Stomach (tissue), 19 donors: ENCODE measurements at regions of chr12 and their contacts with region 1.

Region 1: GRCh38 chr12:6182116-6182898 is 17.9 kb upstream of the CD9 start:
- DNase-seq: peak; percentile 59 to 88
- H3K4me3 ChIP-seq: no peak overlapping the region
- H3K27ac ChIP-seq: peak overlapping the region; percentile 52 to 81 (median 76)
- H3K4me1 ChIP-seq: peaks cover 25 to 63% (median 43%) of the 10 kb centered on the region in 4 donors
- H3K27me3 ChIP-seq: no peaks in the 10 kb centered on the region
- CTCF ChIP-seq: no peak
- EP300 ChIP-seq: no peak
- POLR2A ChIP-seq: no peak

Region 2: DNA sequence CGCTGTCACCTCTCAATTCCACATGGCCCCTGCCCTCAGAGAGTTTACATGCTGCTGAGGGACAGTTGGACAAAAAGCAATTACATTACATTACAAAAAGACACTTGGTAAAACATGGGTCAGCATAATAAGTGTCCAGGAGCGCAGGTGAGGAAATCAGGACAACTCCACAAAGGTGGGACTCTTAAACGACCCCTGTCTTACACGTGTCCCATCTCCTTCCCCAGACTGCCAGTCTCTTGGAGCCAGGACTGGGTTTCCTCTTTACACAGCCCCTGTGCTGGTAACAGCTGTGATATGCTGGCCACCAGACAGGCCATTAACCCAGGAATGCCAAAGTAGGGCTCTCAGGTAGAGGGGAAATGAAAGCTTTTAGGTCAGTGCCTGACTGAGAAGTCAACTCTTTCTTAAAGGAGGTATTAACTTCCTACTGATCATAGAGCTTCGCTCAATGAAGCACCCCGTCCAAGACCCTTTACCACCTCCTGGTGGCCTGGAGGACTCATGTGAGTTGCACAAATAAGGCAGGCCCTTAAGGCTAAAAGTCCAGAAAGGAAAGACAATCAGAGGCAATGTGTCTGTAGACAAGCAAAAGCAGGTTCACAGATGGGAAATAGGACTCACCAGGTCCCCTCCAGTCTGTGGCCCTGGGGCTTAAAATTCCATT is 292.8 kb before region 1 on chr12:
- intact Hi-C with region 1: no loop called
- DNase-seq: no peak
- H3K4me3 ChIP-seq: no peak overlapping the region
- H3K27ac ChIP-seq: no peak overlapping the region
- H3K4me1 ChIP-seq: no peaks in the 10 kb centered on the region
- H3K27me3 ChIP-seq: peaks cover 0 to 24% (median 4%) of the 10 kb centered on the region in 3 donors
- CTCF ChIP-seq: no peak
- EP300 ChIP-seq: no peak
- POLR2A ChIP-seq: no peak

Region 3: DNA sequence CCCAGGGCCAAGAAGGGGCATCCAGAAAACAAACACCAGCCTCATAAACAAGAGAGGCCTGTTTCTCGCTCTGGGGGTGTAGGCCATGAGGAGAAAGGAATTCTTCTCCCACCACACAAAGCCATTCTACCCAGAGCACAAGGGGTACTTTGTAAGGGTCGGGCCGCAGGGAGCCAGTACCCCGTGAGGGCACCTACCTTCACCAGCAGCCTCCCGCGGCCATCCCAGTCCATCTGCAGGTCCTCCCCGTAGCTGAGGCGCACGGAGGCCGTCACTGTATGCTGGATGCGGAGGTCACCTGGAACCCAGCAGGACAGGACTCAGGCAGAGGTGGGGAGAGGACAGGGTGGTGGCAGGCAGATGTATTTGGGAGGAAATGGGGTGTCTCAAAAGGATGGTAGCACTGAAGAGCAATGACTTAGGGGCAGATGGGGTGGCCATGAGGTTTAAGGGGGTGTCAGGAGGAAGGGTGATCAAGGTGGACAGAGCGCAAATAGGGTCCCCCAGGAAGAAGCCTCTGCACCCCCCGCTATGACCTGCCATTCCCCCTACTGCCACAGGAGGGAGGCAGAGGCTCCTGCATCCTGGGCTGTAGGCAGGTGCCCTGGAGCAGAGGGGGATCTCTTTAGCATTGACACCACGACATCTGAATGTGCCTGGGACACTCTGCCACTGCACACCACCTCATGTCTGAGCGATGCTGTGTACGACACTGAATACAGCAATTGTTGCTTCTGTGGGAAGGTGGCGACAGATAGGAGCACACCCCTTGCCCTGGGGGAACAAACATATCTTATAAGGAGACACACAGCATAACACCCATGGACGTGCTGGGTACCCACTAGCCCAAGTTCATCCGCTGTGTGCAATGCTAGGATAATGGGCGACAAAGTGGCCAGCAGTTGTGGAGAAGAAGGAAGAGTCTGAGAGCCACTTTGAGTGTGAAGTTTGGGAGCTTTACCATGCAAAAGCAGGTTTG is 119.3 kb before region 1 on chr12:
- intact Hi-C with region 1: loop called (anchors 10 kb)
- DNase-seq: peak; percentile 53 to 81
- H3K4me3 ChIP-seq: no peak overlapping the region
- H3K27ac ChIP-seq: no peak overlapping the region
- H3K4me1 ChIP-seq: peaks cover 0 to 8% (median 4%) of the 10 kb centered on the region in 4 donors
- H3K27me3 ChIP-seq: peaks cover 0 to 8% (median 0%) of the 10 kb centered on the region in 3 donors
- CTCF ChIP-seq: peak in 6 of 7 experiments; percentile 3 to 90 (median 84)
- EP300 ChIP-seq: no peak
- POLR2A ChIP-seq: no peak

Region 4: GRCh38 chr12:6662906-6663742 is 480.8 kb after region 1 on chr12 and contains the start of gene ING4:
- intact Hi-C with region 1: no loop called
- DNase-seq: peak; percentile 98 to 100
- H3K4me3 ChIP-seq: peak within 1 kb of the TSS; percentile 66 to 99 (median 88)
- H3K27ac ChIP-seq: peak within 1 kb of the TSS; percentile 58 to 91 (median 85)
- H3K4me1 ChIP-seq: peaks cover 14 to 41% (median 21%) of the 10 kb centered on the region in 4 donors
- H3K27me3 ChIP-seq: no peaks in the 10 kb centered on the region
- CTCF ChIP-seq: no peak
- EP300 ChIP-seq: no peak
- POLR2A ChIP-seq: no peak
- total RNA-seq, gene ING4: 8.7 to 51.8 (median 33.5) TPM